Aorta (tissue), 5 donors: ENCODE measurements at regions of chr16 and their contacts with region 1.

Region 1: DNA sequence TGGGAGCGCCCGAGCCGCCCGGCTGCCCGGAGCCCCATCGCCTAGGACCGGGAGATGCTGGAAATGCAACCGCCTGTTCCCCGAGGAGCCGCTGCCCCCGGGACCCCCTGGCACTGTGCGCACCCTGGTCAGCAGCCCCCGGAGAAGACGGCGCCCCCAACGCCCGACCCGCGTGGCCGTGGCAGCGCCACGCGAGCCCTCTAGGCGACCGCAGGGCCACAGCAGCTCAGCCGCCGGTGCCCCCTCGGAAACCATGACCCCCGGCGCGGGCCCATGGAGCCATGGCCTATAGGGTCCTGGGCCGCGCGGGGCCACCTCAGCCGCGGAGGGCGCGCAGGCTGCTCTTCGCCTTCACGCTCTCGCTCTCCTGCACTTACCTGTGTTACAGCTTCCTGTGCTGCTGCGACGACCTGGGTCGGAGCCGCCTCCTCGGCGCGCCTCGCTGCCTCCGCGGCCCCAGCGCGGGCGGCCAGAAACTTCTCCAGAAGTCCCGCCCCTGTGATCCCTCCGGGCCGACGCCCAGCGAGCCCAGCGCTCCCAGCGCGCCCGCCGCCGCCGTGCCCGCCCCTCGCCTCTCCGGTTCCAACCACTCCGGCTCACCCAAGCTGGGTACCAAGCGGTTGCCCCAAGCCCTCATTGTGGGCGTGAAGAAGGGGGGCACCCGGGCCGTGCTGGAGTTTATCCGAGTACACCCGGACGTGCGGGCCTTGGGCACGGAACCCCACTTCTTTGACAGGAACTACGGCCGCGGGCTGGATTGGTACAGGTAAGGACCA is 556 bp downstream of the HS3ST2 start:
- DNase-seq: peak in 1 of 2 donors; percentile 79
- ATAC-seq: no peak
- H3K4me3 ChIP-seq: peak overlapping the region; percentile 50 to 70
- H3K27ac ChIP-seq: peak overlapping the region in 1 of 2 donors; percentile 8
- H3K4me1 ChIP-seq: no peaks in the 10 kb centered on the region
- H3K27me3 ChIP-seq: no peaks in the 10 kb centered on the region

Region 2: DNA sequence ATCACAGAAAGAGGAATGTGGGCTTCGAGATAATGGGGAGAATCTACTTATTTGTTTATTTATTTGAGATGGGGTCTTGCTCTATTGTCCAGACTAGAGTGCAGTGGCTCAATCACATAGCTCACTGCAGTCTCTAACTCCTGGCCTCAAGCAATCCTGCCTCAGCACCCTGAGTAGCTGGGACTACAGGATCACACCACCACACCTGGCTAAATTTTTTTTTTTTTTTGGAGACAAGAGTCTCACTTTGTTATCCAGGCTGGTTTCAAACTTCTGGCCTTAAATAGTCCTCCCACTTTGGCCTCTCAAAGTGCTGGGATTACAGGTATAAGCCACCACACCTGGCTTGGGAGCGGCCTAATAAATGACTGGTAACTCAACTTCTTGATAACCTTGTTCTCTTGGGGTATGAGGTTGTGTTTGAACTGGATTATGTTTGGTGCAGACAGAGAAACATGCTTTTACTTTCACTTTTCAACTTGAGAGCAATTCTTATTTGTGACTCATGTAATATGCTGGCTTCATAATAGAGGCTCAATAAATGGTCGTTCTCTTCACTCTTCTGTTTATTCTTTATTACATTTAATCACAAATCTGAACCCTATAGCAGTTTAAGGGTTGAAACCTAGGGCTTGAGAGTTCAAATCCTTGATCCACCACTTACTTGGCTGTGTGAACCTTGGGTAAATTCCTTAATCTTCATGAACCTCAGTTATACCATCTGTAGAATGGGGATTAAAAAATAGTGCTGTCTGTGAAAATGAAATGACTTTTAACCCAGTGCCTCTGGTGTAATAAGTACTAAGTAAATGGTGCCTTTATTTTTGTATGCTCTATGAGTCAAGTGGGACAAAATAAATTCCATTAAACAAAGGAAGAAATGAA is 129.7 kb before region 1 on chr16:
- intact Hi-C with region 1: loop called in 1 of 2 experiments (anchors 5 kb)
- DNase-seq: no peak
- ATAC-seq: peak; percentile 23
- H3K4me3 ChIP-seq: no peak overlapping the region
- H3K27ac ChIP-seq: peak overlapping the region; percentile 62 to 74
- H3K4me1 ChIP-seq: peaks cover 0 to 4% of the 10 kb centered on the region in 2 donors
- H3K27me3 ChIP-seq: no peaks in the 10 kb centered on the region

Region 3: DNA sequence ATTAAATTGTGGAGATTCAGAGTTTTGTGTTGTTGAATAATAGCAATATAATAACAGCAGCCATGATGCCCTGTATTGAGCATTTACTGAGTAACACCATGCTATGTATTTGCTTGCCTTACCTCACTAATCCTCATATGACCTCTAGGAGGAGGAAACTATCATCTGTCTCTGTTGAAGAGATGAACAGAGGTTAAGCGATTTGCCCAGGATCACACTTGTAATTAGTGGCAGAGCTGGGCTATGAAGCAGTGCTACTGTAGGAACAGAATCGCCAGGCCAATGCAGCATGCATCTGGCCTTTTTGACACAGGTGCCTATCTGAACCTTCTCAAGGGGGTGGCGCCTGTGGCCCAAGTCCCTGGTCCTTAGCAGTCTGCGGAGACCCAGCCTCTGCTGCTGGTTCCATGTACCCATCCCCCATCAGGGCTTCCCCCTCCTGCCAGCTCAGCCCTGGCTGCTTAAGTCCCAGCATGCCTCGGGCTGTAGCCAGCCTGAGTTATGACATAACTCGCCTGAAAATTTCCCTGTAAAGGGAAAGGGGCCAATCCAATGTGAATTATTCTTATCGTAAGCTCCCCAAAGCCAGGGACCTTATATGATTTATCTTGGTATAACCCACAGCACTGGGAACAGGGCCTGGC is 51.0 kb before region 1 on chr16:
- intact Hi-C with region 1: no loop called
- DNase-seq: peak; percentile 50 to 73
- ATAC-seq: peak; percentile 70
- H3K4me3 ChIP-seq: no peak overlapping the region
- H3K27ac ChIP-seq: no peak overlapping the region
- H3K4me1 ChIP-seq: peaks cover 0 to 5% of the 10 kb centered on the region in 2 donors
- H3K27me3 ChIP-seq: no peaks in the 10 kb centered on the region

Region 4: DNA sequence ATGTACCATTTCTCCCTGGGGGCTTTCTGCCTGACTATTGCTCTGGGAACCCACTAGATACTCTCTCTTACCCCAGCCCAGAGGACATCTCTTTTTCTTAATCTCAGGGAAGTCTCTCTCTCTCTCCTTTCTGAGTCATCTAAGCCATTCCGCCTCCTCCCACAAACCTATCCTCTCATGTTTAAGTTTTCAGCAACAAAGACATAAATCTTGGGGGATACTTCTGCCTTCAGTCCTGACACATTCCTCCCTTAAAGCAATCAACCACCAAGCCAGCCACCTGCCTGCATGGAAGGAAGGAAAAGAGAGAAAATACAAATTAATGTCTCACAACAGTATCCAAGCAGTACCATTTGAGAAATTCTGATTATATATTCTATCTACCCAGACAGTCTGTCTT is 128.3 kb after region 1 on chr16:
- intact Hi-C with region 1: loop called in 1 of 2 experiments (anchors 5 kb)
- DNase-seq: no peak
- ATAC-seq: no peak
- H3K4me3 ChIP-seq: no peak overlapping the region
- H3K27ac ChIP-seq: no peak overlapping the region
- H3K4me1 ChIP-seq: no peaks in the 10 kb centered on the region
- H3K27me3 ChIP-seq: peaks cover 0 to 1% of the 10 kb centered on the region in 2 donors